MCF 10A (cell line): ENCODE measurements at regions of chr4 and their contacts with region 1.

Region 1: GRCh38 chr4:154416190-154416547 is 75.4 kb downstream of the DCHS2 start:
- DNase-seq: peak; percentile 36
- H3K4me3 Mint-ChIP-seq: peak overlapping the region; percentile 79
- H3K27ac Mint-ChIP-seq: peak overlapping the region; percentile 33
- H3K4me1 Mint-ChIP-seq: peaks cover 13% of the 10 kb centered on the region
- H3K27me3 Mint-ChIP-seq: no peaks in the 10 kb centered on the region
- CTCF ChIP-seq: no peak

Region 2: DNA sequence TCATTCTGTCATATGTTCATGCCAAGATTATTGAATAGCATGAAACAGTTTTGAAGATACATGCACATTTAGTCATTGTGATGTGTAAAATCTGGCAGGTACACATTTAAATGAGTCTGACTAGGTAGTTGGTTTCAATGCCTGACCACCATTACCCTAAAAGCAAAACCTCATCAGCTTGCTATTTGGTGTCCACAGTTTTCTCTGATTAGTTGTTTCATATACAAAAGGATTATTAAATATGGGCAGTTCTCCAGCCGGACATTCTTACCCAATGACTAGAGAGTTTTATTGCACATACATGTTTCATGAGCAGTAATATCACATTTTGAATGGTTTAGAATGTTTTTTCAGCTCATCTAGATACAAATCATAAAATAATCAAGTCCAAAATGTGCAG is 51.7 kb after region 1 on chr4:
- CTCF ChIA-PET with region 1: no interaction called
- POLR2A ChIA-PET with region 1: interaction called, 3 read pairs
- intact Hi-C with region 1: loop called (anchors 5 kb)
- DNase-seq: peak; percentile 73
- H3K4me3 Mint-ChIP-seq: no peak overlapping the region
- H3K27ac Mint-ChIP-seq: no peak overlapping the region
- H3K4me1 Mint-ChIP-seq: peaks cover 23% of the 10 kb centered on the region
- H3K27me3 Mint-ChIP-seq: no peaks in the 10 kb centered on the region
- CTCF ChIP-seq: no peak